Aorta (tissue), 5 donors: ENCODE measurements at regions of chr16 and their contacts with region 1.

Region 1: GRCh38 chr16:88442727-88443576 is 10.1 kb upstream of the ZFPM1 start:
- DNase-seq: peak; percentile 83 to 93
- ATAC-seq: peak; percentile 75
- H3K4me3 ChIP-seq: no peak overlapping the region
- H3K27ac ChIP-seq: no peak overlapping the region
- H3K4me1 ChIP-seq: no peaks in the 10 kb centered on the region
- H3K27me3 ChIP-seq: no peaks in the 10 kb centered on the region

Region 2: DNA sequence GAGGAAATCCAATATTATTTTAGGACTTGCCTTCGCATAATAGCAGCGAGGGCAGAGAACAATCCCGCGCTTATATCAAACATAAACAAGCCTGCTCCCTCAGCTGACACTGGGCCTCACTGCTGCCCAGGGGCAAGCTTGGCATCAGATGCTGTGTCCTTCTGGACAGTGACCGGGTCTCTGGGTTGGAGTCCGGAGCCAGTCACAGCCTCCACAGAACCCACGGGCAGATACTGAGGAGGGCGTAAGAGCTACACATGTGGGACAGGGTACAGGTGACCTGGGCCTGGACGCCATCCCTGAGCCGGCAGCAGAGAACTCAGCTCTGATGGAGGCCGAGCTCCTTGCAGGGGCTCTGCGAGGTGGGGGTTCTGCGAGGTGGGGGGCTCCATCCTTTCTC is 74.9 kb before region 1 on chr16:
- intact Hi-C with region 1: no loop called
- DNase-seq: peak in 1 of 2 donors; percentile 26
- ATAC-seq: no peak
- H3K4me3 ChIP-seq: no peak overlapping the region
- H3K27ac ChIP-seq: no peak overlapping the region
- H3K4me1 ChIP-seq: no peaks in the 10 kb centered on the region
- H3K27me3 ChIP-seq: no peaks in the 10 kb centered on the region

Region 3: DNA sequence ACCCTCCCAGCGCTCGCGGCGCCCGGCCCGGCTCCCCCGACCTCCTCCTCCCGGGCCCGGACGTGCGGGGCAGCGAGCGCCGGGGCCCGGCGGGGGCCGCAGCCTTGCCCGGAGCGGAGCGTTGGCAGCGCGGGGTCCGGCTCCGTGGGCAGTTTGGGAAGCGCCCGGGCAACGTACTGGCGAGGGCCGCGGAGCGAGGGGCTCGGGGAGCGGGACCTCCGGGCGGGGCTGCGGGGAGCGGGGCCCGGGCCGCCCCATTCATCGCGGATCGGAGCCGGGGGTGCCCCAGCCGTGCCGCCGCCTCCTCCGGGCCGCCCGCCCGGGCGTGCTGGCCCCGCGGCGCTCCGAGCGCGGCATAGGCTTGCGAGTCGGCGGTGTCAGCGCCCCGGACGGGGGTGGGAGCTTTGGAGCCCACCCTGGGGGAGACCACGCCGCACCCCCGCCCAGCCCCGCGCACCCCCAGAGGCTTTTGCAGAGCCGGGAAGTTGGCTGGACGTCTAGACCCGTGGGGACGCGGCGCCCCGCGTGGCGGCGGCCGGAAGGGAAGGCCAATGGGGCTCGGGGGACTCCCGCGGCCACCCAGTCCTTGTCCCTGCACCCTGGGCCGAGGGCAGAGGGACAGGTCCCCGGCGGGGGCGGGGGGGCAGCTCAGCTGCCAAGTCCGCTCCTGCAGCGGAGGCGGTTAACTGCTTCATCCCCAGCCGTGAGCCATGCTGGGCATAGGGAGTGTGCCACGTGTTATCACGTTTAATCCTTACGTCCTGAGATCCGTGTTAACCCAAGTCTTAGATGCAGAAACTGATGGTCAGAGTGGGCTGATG is 59.3 kb before region 1 on chr16:
- intact Hi-C with region 1: no loop called
- DNase-seq: peak; percentile 62 to 85
- ATAC-seq: no peak
- H3K4me3 ChIP-seq: peak overlapping the region; percentile 23 to 24
- H3K27ac ChIP-seq: no peak overlapping the region
- H3K4me1 ChIP-seq: no peaks in the 10 kb centered on the region
- H3K27me3 ChIP-seq: no peaks in the 10 kb centered on the region

Region 4: GRCh38 chr16:88398874-88399178 is 44.1 kb before region 1 on chr16:
- intact Hi-C with region 1: no loop called
- DNase-seq: no peak
- ATAC-seq: no peak
- H3K4me3 ChIP-seq: no peak overlapping the region
- H3K27ac ChIP-seq: no peak overlapping the region
- H3K4me1 ChIP-seq: no peaks in the 10 kb centered on the region
- H3K27me3 ChIP-seq: no peaks in the 10 kb centered on the region

Region 5: GRCh38 chr16:88527186-88527936 is 84.4 kb after region 1 on chr16:
- intact Hi-C with region 1: loop called (anchors 2 to 5 kb)
- DNase-seq: peak in 1 of 2 donors; percentile 87
- ATAC-seq: peak; percentile 62
- H3K4me3 ChIP-seq: no peak overlapping the region
- H3K27ac ChIP-seq: no peak overlapping the region
- H3K4me1 ChIP-seq: no peaks in the 10 kb centered on the region
- H3K27me3 ChIP-seq: no peaks in the 10 kb centered on the region

Region 6: GRCh38 chr16:88561485-88562369 is 118.8 kb after region 1 on chr16:
- intact Hi-C with region 1: loop called (anchors 2 kb)
- DNase-seq: peak in 1 of 2 donors; percentile 83
- ATAC-seq: peak; percentile 79
- H3K4me3 ChIP-seq: no peak overlapping the region
- H3K27ac ChIP-seq: no peak overlapping the region
- H3K4me1 ChIP-seq: no peaks in the 10 kb centered on the region
- H3K27me3 ChIP-seq: no peaks in the 10 kb centered on the region